Right ventricle myocardium superior (tissue), 1 donor: ENCODE measurements at regions of chr10 and their contacts with region 1.

Region 1: GRCh38 chr10:4656576-4657182 is 169.3 kb upstream of the AKR1E2 start:
- DNase-seq: peak; percentile 62
- ATAC-seq: peak; percentile 76

Region 2: GRCh38 chr10:4512671-4513240 is 143.9 kb before region 1 on chr10:
- intact Hi-C with region 1: loop called (anchors 5 kb)
- DNase-seq: peak; percentile 68
- ATAC-seq: peak; percentile 81

Region 3: GRCh38 chr10:4926400-4926799 is 269.7 kb after region 1 on chr10:
- intact Hi-C with region 1: no loop called
- DNase-seq: no peak
- ATAC-seq: no peak